Aorta (tissue), 5 donors: ENCODE measurements at regions of chr9 and their contacts with region 1.

Region 1: DNA sequence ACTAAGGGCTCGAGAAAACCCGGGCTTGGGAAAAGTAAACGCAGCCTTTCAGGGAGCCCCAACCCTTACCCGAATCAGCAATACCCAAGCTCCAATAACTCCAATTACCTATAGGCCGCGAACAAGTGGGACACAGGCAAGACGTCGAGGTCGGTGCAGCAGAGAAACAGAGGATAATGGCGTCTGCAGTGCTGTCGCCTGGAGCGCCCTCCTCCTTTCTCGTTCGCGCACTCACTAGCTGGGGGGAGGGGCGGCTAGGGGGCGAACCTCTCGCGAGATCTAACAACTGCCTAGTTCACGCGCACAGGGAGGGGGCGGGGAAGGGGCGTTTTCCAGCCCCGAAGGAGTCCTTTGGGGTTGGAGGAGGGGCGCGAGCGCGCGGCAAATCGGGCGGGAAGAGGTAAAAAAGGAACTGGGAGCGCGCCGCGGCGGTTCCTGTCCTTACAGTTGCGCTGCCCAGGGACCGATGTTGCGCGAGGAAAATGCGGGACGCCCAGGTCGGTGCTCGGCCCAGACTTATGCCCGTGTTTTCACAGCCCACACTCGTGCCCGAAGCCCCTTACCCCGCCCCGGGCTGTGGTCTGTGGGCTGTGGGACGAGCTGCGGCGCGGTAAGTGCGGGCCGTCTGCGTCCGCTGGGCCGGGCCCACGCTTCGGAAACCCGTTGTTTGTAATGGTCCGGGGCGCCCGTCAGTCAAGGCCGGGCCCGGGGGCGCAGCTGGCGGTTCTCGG is at the start of gene RMI1:
- DNase-seq: peak; percentile 100
- ATAC-seq: peak; percentile 98
- H3K4me3 ChIP-seq: peak within 1 kb of the TSS; percentile 67 to 83
- H3K27ac ChIP-seq: peak within 1 kb of the TSS; percentile 74 to 91
- H3K4me1 ChIP-seq: peaks cover 0 to under 1% of the 10 kb centered on the region in 2 donors
- H3K27me3 ChIP-seq: no peaks in the 10 kb centered on the region
- total RNA-seq, gene RMI1: 2.9 to 3.4 TPM

Region 2: GRCh38 chr9:83920927-83921707 is 59.4 kb before region 1 on chr9 and contains the start of gene KIF27:
- intact Hi-C with region 1: loop called in 1 of 2 experiments (anchors 5 kb)
- DNase-seq: peak; percentile 100
- ATAC-seq: peak; percentile 99
- H3K4me3 ChIP-seq: peak within 1 kb of the TSS; percentile 85 to 87
- H3K27ac ChIP-seq: peak within 1 kb of the TSS; percentile 43 to 70
- H3K4me1 ChIP-seq: no peaks in the 10 kb centered on the region
- H3K27me3 ChIP-seq: no peaks in the 10 kb centered on the region
- total RNA-seq, gene KIF27: 6.8 to 8.0 TPM

Region 3: GRCh38 chr9:83956434-83957247 is 23.9 kb before region 1 on chr9:
- intact Hi-C with region 1: loop called in 1 of 2 experiments (anchors 1 kb)
- DNase-seq: peak; percentile 90 to 93
- ATAC-seq: peak; percentile 95
- H3K4me3 ChIP-seq: peak overlapping the region; percentile 36 to 43
- H3K27ac ChIP-seq: peak overlapping the region; percentile 34 to 65
- H3K4me1 ChIP-seq: no peaks in the 10 kb centered on the region
- H3K27me3 ChIP-seq: no peaks in the 10 kb centered on the region

Region 4: GRCh38 chr9:84045482-84046097 is 65.0 kb after region 1 on chr9:
- intact Hi-C with region 1: no loop called
- DNase-seq: no peak
- ATAC-seq: peak; percentile 29
- H3K4me3 ChIP-seq: no peak overlapping the region
- H3K27ac ChIP-seq: no peak overlapping the region
- H3K4me1 ChIP-seq: no peaks in the 10 kb centered on the region
- H3K27me3 ChIP-seq: no peaks in the 10 kb centered on the region

Region 5: DNA sequence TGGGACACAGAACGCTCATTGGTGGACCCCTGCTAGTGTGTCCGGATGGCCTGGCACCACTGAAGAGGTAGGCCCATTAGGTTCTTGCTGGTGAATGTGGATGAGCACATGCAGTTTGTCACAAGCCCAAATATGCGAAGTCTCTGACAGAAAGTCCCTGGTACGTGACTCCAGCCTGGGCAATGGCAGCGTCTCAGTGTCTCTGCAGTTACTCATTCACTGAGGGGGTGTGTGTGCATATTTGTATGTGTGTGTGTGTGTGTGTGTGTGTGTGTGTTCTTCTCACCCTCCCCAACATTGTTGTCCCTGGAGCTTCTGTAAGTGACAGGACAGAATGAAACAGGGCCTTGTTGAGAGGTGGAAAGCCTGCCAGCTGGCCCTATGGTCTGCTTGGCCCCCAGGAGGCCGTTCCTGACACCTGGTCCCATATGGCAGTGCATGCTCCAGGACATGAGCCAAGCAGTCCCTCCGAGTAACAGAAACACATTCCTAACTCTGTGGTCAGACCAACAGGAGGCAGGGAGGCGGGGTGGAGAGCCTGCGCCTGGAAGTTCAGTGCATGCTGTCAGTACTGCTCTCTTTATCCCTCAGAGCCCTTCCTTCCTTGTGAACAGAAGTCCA is 190.1 kb after region 1 on chr9:
- intact Hi-C with region 1: loop called (anchors 2 to 5 kb)
- DNase-seq: peak; percentile 86 to 88
- ATAC-seq: peak; percentile 80
- H3K4me3 ChIP-seq: no peak overlapping the region
- H3K27ac ChIP-seq: peak overlapping the region in 1 of 2 donors; percentile 1
- H3K4me1 ChIP-seq: no peaks in the 10 kb centered on the region
- H3K27me3 ChIP-seq: no peaks in the 10 kb centered on the region

Region 6: GRCh38 chr9:84557751-84558150 is 577.2 kb after region 1 on chr9:
- intact Hi-C with region 1: no loop called
- DNase-seq: no peak
- ATAC-seq: no peak
- H3K4me3 ChIP-seq: no peak overlapping the region
- H3K27ac ChIP-seq: no peak overlapping the region
- H3K4me1 ChIP-seq: no peaks in the 10 kb centered on the region
- H3K27me3 ChIP-seq: no peaks in the 10 kb centered on the region

Region 7: GRCh38 chr9:84773022-84773421 is 792.5 kb after region 1 on chr9:
- intact Hi-C with region 1: no loop called
- DNase-seq: no peak
- ATAC-seq: no peak
- H3K4me3 ChIP-seq: no peak overlapping the region
- H3K27ac ChIP-seq: no peak overlapping the region
- H3K4me1 ChIP-seq: no peaks in the 10 kb centered on the region
- H3K27me3 ChIP-seq: no peaks in the 10 kb centered on the region